Left colon (tissue), 2 donors: ENCODE measurements at regions of chr11 and their contacts with region 1.

Region 1: GRCh38 chr11:83292709-83293456 is 6.7 kb upstream of the CCDC90B start:
- DNase-seq: no peak
- ATAC-seq: peak; percentile 58

Region 2: GRCh38 chr11:83625336-83625735 is 332.5 kb after region 1 on chr11:
- intact Hi-C with region 1: no loop called
- DNase-seq: no peak
- ATAC-seq: no peak

Region 3: GRCh38 chr11:83724008-83724461 is 431.2 kb after region 1 on chr11:
- intact Hi-C with region 1: loop called in 1 of 2 experiments (anchors 10 kb)
- DNase-seq: peak in 1 of 2 donors; percentile 8
- ATAC-seq: peak; percentile 45

Region 4: DNA sequence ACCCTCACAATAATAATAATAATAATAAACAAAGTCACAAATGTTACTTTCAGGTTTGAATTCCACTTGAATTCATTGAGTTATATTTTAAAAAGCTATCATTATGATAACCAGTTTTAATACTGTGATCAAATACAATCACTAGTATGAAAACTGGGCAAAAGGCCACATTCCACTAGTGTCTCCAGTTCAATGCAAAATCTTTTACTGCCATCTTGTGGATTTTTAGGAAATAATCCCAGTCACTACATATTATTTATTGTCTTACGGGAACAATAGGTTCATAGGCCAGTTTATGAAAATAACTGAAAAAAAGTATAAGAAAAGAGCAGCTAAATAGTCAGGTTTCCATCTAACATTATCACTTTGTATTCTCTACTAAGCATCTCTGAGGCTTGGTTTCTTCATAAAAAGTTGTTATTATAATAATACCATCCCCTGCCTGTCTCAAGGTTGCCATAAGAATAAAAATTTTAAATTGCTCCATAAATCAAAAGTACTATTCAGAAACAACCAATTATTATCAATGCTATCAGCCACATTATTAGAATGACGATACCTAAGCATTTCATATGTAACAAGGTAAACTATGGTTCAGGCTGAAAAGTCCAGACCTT is 527.2 kb after region 1 on chr11:
- intact Hi-C with region 1: loop called in 1 of 2 experiments (anchors 5 kb)
- DNase-seq: no peak
- ATAC-seq: no peak